Naive thymus-derived CD4-positive, alpha-beta T cell (primary cell): ENCODE measurements at regions of chr5 and their contacts with region 1.

Region 1: DNA sequence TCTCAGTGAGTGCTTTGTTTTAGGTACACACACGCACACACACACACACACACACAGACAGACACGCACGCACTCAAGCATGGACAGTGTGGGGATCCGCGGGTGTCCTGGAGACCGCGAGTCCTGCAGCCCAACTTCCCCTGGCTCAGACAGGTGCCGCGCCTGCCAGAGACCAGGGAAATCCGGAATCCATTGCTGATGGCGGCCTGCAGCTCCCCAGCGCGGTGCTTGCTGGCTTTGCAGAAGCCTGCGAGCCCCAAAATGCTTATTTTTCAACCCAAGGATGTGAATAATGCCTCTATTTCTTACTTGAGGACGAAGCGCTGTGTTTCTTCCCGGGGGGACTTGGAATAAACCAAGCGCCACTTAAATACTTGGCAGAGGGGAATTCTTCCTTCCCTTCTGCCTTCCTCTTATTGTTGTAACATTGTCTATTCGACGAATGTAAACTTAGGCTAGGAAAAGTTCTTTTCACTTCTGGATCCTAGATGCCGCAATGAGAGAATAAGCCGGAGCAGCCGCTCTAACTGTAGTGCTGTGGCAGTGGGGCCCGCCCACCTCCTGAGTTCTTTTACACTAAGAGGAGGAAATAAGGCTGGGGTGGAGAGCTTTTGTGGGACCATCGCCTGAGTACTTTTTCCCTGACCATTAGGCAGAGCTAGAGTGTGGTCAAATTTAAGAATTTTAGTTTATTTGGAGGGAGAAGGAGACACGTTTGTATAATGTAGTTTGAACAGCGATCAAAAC is 802 bp downstream of the ITGA2 start:
- DNase-seq: peak in 8 of 9 donors; percentile 7 to 46 (median 20)
- ATAC-seq: peak; percentile 59
- H3K4me3 ChIP-seq: peak overlapping the region; percentile 66
- H3K4me3 Mint-ChIP-seq: peak overlapping the region; percentile 64 to 86 (median 80)
- H3K27ac ChIP-seq: no peak overlapping the region
- H3K27ac Mint-ChIP-seq: peak overlapping the region in 4 of 9 donors; percentile 22 to 73 (median 42)
- H3K4me1 ChIP-seq: peaks cover 0 to 5% of the 10 kb centered on the region in 2 donors
- H3K4me1 Mint-ChIP-seq: peaks cover 6 to 44% (median 10%) of the 10 kb centered on the region in 7 donors
- H3K27me3 ChIP-seq: no peaks in the 10 kb centered on the region
- H3K27me3 Mint-ChIP-seq: peaks cover 0 to 40% (median 13%) of the 10 kb centered on the region in 5 donors

Region 2: DNA sequence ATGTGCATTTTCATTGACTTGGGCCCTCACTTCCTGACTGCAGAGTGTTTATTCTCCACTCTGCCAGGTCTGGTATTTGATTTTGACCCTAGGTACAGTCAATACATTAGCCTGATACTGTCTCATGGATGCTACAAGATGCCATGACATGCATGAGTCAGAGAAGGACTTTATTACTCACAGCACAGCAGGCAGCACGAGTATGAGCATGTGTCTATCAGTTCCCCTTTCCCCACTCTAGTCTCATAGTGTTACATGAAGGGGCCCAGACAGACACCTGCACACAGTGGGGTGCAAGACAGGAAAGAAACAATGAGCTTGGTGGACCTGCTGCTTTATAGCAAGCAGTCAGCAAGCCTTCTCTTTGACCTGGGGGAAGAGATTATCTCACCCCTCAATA is 18.8 kb after region 1 on chr5:
- CTCF ChIA-PET with region 1: no interaction called
- POLR2A ChIA-PET with region 1: no interaction called
- intact Hi-C with region 1: loop called in 1 of 2 experiments (anchors 1 kb)
- DNase-seq: peak in 1 of 9 donors; percentile 45
- ATAC-seq: peak; percentile 59
- H3K4me3 ChIP-seq: no peak overlapping the region
- H3K4me3 Mint-ChIP-seq: peak overlapping the region in 1 of 10 donors; percentile 21
- H3K27ac ChIP-seq: no peak overlapping the region
- H3K27ac Mint-ChIP-seq: peak overlapping the region in 2 of 9 donors; percentile 23 to 76
- H3K4me1 ChIP-seq: peaks cover 0 to 9% of the 10 kb centered on the region in 2 donors
- H3K4me1 Mint-ChIP-seq: peaks cover 0 to 78% (median 23%) of the 10 kb centered on the region in 7 donors
- H3K27me3 ChIP-seq: no peaks in the 10 kb centered on the region
- H3K27me3 Mint-ChIP-seq: peaks cover 0 to 3% (median 0%) of the 10 kb centered on the region in 5 donors

Region 3: DNA sequence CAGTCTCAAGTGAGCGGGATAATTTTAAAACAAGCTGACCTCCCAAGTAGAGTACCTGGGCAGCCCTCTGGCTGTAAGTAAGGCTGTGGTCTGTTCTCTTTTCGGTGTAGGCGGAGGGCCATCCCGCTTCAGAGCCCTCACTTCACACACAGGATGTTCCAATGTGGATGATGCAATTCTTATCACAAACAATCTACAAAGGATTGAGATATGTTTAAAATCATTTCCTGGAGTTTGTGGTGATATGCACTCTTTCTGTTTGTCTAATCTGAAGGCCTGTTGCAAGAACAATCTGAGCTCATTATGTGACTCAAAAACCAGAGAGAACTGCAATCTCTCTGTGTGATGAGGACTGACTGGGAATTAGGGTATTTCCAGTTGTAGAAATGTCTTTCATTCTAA is 41.7 kb after region 1 on chr5:
- CTCF ChIA-PET with region 1: interaction called, 4 read pairs
- POLR2A ChIA-PET with region 1: no interaction called
- intact Hi-C with region 1: loop called in 1 of 2 experiments (anchors 2 kb)
- DNase-seq: peak in 8 of 9 donors; percentile 25 to 68 (median 60)
- ATAC-seq: peak; percentile 89
- H3K4me3 ChIP-seq: no peak overlapping the region
- H3K4me3 Mint-ChIP-seq: peak overlapping the region in 8 of 10 donors; percentile 0 to 79 (median 60)
- H3K27ac ChIP-seq: peak overlapping the region; percentile 44
- H3K27ac Mint-ChIP-seq: peak overlapping the region; percentile 53 to 89 (median 81)
- H3K4me1 ChIP-seq: peaks cover 0 to 18% of the 10 kb centered on the region in 2 donors
- H3K4me1 Mint-ChIP-seq: peaks cover 12 to 55% (median 29%) of the 10 kb centered on the region in 7 donors
- H3K27me3 ChIP-seq: no peaks in the 10 kb centered on the region
- H3K27me3 Mint-ChIP-seq: no peaks in the 10 kb centered on the region

Region 4: GRCh38 chr5:53041071-53041692 is 51.2 kb after region 1 on chr5:
- CTCF ChIA-PET with region 1: no interaction called
- POLR2A ChIA-PET with region 1: no interaction called
- intact Hi-C with region 1: loop called in 1 of 2 experiments (anchors 1 kb)
- DNase-seq: peak in 5 of 9 donors; percentile 6 to 49 (median 27)
- ATAC-seq: peak; percentile 81
- H3K4me3 ChIP-seq: peak overlapping the region; percentile 24
- H3K4me3 Mint-ChIP-seq: peak overlapping the region; percentile 16 to 88 (median 74)
- H3K27ac ChIP-seq: no peak overlapping the region
- H3K27ac Mint-ChIP-seq: peak overlapping the region; percentile 12 to 92 (median 66)
- H3K4me1 ChIP-seq: peaks cover 7 to 12% of the 10 kb centered on the region in 2 donors
- H3K4me1 Mint-ChIP-seq: peaks cover 11 to 77% (median 24%) of the 10 kb centered on the region in 7 donors
- H3K27me3 ChIP-seq: no peaks in the 10 kb centered on the region
- H3K27me3 Mint-ChIP-seq: peaks cover 0 to 4% (median 0%) of the 10 kb centered on the region in 5 donors

Region 5: DNA sequence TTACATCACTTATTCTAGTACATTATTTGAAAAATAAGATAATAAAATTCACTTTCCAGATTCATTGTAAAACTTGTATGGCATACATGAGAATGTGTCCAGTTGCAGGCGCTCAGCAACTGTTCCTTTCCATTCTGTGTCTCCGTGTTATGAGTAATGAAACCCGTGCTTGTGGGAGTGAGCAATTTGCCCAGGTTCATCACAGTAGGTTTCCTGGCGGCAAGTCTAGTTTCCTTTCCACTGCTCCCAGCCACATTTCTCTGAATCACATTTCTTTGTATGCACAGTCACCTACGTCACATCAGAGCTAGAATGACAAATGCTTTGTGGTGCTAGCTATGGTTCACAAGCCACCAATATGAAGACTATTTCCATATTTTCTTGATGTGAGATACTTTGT is 79.7 kb after region 1 on chr5:
- CTCF ChIA-PET with region 1: no interaction called
- POLR2A ChIA-PET with region 1: no interaction called
- intact Hi-C with region 1: loop called in 1 of 2 experiments (anchors 1 kb)
- DNase-seq: peak in 1 of 9 donors; percentile 65
- ATAC-seq: no peak
- H3K4me3 ChIP-seq: no peak overlapping the region
- H3K4me3 Mint-ChIP-seq: peak overlapping the region in 1 of 10 donors; percentile 80
- H3K27ac ChIP-seq: no peak overlapping the region
- H3K27ac Mint-ChIP-seq: peak overlapping the region in 1 of 9 donors; percentile 75
- H3K4me1 ChIP-seq: no peaks in the 10 kb centered on the region
- H3K4me1 Mint-ChIP-seq: peaks cover 0 to 42% (median 0%) of the 10 kb centered on the region in 7 donors
- H3K27me3 ChIP-seq: no peaks in the 10 kb centered on the region
- H3K27me3 Mint-ChIP-seq: peaks cover 0 to 7% (median 0%) of the 10 kb centered on the region in 5 donors

Region 6: GRCh38 chr5:53089345-53089991 is 99.5 kb after region 1 on chr5:
- CTCF ChIA-PET with region 1: no interaction called
- POLR2A ChIA-PET with region 1: no interaction called
- intact Hi-C with region 1: loop called in 1 of 2 experiments (anchors 2 kb)
- DNase-seq: peak in 6 of 9 donors; percentile 29 to 60 (median 40)
- ATAC-seq: peak; percentile 65
- H3K4me3 ChIP-seq: no peak overlapping the region
- H3K4me3 Mint-ChIP-seq: peak overlapping the region in 7 of 10 donors; percentile 32 to 71 (median 47)
- H3K27ac ChIP-seq: no peak overlapping the region
- H3K27ac Mint-ChIP-seq: peak overlapping the region in 5 of 9 donors; percentile 25 to 76 (median 40)
- H3K4me1 ChIP-seq: peaks cover 0 to 16% of the 10 kb centered on the region in 2 donors
- H3K4me1 Mint-ChIP-seq: peaks cover 11 to 61% (median 19%) of the 10 kb centered on the region in 7 donors
- H3K27me3 ChIP-seq: no peaks in the 10 kb centered on the region
- H3K27me3 Mint-ChIP-seq: peaks cover 0 to 2% (median 0%) of the 10 kb centered on the region in 5 donors

Region 7: GRCh38 chr5:53095931-53096525 is 106.1 kb after region 1 on chr5:
- CTCF ChIA-PET with region 1: no interaction called
- POLR2A ChIA-PET with region 1: no interaction called
- intact Hi-C with region 1: loop called (anchors 1 kb)
- DNase-seq: peak; percentile 17 to 69 (median 59)
- ATAC-seq: peak; percentile 96
- H3K4me3 ChIP-seq: no peak overlapping the region
- H3K4me3 Mint-ChIP-seq: no peak overlapping the region
- H3K27ac ChIP-seq: no peak overlapping the region
- H3K27ac Mint-ChIP-seq: peak overlapping the region in 3 of 9 donors; percentile 41 to 64 (median 53)
- H3K4me1 ChIP-seq: no peaks in the 10 kb centered on the region
- H3K4me1 Mint-ChIP-seq: peaks cover 0 to 28% (median 3%) of the 10 kb centered on the region in 7 donors
- H3K27me3 ChIP-seq: no peaks in the 10 kb centered on the region
- H3K27me3 Mint-ChIP-seq: no peaks in the 10 kb centered on the region